ENCODE measurements at regions of chr11 and their contacts with region 1.

Region 1: GRCh38 chr11:75204685-75205563 is 35.6 kb upstream of the TPBGL start:
- DNase-seq: peak; percentile 58 to 97
- H3K4me3 ChIP-seq: no peak overlapping the region
- H3K27ac ChIP-seq: no peak overlapping the region
- H3K4me1 ChIP-seq: 0 out of 7 replicates have a peak, but pooled peaks cover 0 to 2% (median 0%) of the 10 kb centered on the region in 4 experiments
- H3K27me3 ChIP-seq: no peaks in the 10 kb centered on the region; a peak in 1 of 7 replicates
- CTCF ChIP-seq: peak; percentile 90 to 97 (median 93)
- EP300 ChIP-seq: no peak
- POLR2A ChIP-seq: no peak
- RAD21 ChIP-seq: peak; percentile 91 to 96

Region 2: GRCh38 chr11:74929431-74930363 is 275.2 kb before region 1 on chr11:
- CTCF ChIA-PET with region 1: interaction called, 19 read pairs
- POLR2A ChIA-PET with region 1: no interaction called
- DNase-seq: peak in 1 of 2 experiments; percentile 66
- H3K4me3 ChIP-seq: no peak overlapping the region
- H3K27ac ChIP-seq: no peak overlapping the region
- H3K4me1 ChIP-seq: no peaks in the 10 kb centered on the region
- H3K27me3 ChIP-seq: no peaks in the 10 kb centered on the region
- CTCF ChIP-seq: peak in 2 of 3 experiments; percentile 77 to 81; a peak in 3 of 4 replicates
- EP300 ChIP-seq: no peak
- POLR2A ChIP-seq: no peak
- RAD21 ChIP-seq: peak; percentile 82 to 90

Region 3: DNA sequence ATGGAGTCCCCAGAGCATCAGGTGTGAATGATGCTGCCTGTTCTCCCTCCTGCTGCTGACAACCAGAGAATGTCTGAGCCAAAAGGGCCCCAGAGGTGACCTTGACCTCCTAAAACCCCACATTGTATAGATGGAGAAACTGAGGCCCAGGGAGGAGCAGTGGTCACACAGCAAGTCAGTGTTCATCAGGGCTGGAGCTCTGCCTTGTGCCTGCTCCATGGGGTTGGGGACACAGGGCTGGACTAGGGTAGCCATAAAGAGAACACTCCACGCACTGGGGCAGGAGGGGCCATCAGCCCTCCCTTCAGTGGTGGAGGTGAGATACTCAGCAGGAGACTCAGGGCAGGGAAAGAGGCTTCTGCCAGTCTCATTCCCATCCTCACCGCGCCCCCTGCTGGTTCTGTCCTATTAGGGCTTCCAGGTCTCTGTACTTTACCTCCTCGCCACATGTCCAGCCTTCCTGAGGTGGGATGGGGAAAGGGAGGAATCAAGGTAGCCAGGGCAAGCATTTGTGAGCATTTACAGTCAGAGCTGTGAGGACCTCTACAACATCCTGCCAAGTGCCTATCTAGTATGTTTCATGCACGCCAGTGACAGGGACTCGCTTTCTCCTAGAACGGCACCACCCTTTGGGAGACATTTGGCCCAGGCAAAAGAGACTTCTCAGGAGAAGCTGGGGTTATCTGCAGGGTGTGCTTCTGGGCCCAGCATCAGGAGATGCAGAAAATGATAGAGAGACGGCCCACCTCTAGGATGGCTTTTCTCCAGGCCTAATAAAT is 173.0 kb before region 1 on chr11:
- CTCF ChIA-PET with region 1: interaction called, 17 read pairs
- POLR2A ChIA-PET with region 1: no interaction called
- DNase-seq: peak; percentile 39 to 93
- H3K4me3 ChIP-seq: no peak overlapping the region
- H3K27ac ChIP-seq: no peak overlapping the region
- H3K4me1 ChIP-seq: 0 out of 7 replicates have a peak, but pooled peaks cover 0 to 2% (median 0%) of the 10 kb centered on the region in 4 experiments
- H3K27me3 ChIP-seq: no peaks in the 10 kb centered on the region
- CTCF ChIP-seq: peak; percentile 79 to 92 (median 81)
- EP300 ChIP-seq: no peak
- POLR2A ChIP-seq: no peak
- RAD21 ChIP-seq: peak; percentile 62 to 70

Region 4: GRCh38 chr11:75160192-75160757 is 44.6 kb before region 1 on chr11:
- CTCF ChIA-PET with region 1: interaction called, 825 read pairs
- POLR2A ChIA-PET with region 1: no interaction called
- DNase-seq: no peak
- H3K4me3 ChIP-seq: no peak overlapping the region
- H3K27ac ChIP-seq: no peak overlapping the region
- H3K4me1 ChIP-seq: no peaks in the 10 kb centered on the region; a peak in 1 of 7 replicates
- H3K27me3 ChIP-seq: no peaks in the 10 kb centered on the region
- CTCF ChIP-seq: no peak
- EP300 ChIP-seq: no peak
- POLR2A ChIP-seq: no peak
- RAD21 ChIP-seq: no peak

Region 5: GRCh38 chr11:75174781-75175370 is 30.0 kb before region 1 on chr11:
- CTCF ChIA-PET with region 1: interaction called, 39 read pairs
- POLR2A ChIA-PET with region 1: no interaction called
- DNase-seq: no peak
- H3K4me3 ChIP-seq: no peak overlapping the region
- H3K27ac ChIP-seq: no peak overlapping the region
- H3K4me1 ChIP-seq: no peaks in the 10 kb centered on the region; a peak in 1 of 7 replicates
- H3K27me3 ChIP-seq: no peaks in the 10 kb centered on the region
- CTCF ChIP-seq: no peak
- EP300 ChIP-seq: no peak
- POLR2A ChIP-seq: no peak
- RAD21 ChIP-seq: no peak

Region 6: GRCh38 chr11:75223954-75224643 is 19.2 kb after region 1 on chr11:
- CTCF ChIA-PET with region 1: interaction called, 51 read pairs
- POLR2A ChIA-PET with region 1: no interaction called
- DNase-seq: no peak
- H3K4me3 ChIP-seq: no peak overlapping the region
- H3K27ac ChIP-seq: no peak overlapping the region
- H3K4me1 ChIP-seq: peaks cover 0 to 5% (median 1%) of the 10 kb centered on the region in 4 experiments; a peak in 1 of 7 replicates
- H3K27me3 ChIP-seq: no peaks in the 10 kb centered on the region
- CTCF ChIP-seq: peak in 2 of 3 experiments; percentile 15 to 24; a peak in 2 of 4 replicates
- EP300 ChIP-seq: no peak
- POLR2A ChIP-seq: no peak
- RAD21 ChIP-seq: no peak; a peak in 1 of 4 replicates